Aorta (tissue), 5 donors: ENCODE measurements at regions of chr9 and their contacts with region 1.

Region 1: DNA sequence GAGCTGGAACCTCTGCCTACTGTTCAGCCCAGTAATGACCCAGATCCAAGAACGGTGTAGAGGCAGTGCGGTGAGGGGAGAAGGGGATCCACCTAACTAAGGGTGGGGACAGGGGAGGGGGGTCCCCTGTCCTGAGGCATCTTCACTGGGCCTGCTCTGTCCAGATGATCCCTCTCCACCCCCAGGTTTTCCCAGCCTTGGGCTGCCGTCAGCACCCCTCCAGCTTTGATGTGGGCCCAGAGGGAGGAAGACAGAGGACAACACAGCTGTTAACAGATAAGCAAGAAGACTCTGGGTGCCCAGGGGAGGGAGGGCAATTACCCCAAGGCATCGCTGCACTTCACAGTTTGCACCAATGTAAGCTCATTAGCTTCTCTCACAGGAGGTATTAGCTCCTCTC is 19.3 kb downstream of the BICD2 start:
- DNase-seq: no peak
- ATAC-seq: no peak
- H3K4me3 ChIP-seq: no peak overlapping the region
- H3K27ac ChIP-seq: no peak overlapping the region
- H3K4me1 ChIP-seq: no peaks in the 10 kb centered on the region
- H3K27me3 ChIP-seq: no peaks in the 10 kb centered on the region

Region 2: GRCh38 chr9:92648474-92649372 is 96.6 kb before region 1 on chr9:
- intact Hi-C with region 1: no loop called
- DNase-seq: peak in 1 of 2 donors; percentile 57
- ATAC-seq: no peak
- H3K4me3 ChIP-seq: no peak overlapping the region
- H3K27ac ChIP-seq: no peak overlapping the region
- H3K4me1 ChIP-seq: no peaks in the 10 kb centered on the region
- H3K27me3 ChIP-seq: no peaks in the 10 kb centered on the region

Region 3: DNA sequence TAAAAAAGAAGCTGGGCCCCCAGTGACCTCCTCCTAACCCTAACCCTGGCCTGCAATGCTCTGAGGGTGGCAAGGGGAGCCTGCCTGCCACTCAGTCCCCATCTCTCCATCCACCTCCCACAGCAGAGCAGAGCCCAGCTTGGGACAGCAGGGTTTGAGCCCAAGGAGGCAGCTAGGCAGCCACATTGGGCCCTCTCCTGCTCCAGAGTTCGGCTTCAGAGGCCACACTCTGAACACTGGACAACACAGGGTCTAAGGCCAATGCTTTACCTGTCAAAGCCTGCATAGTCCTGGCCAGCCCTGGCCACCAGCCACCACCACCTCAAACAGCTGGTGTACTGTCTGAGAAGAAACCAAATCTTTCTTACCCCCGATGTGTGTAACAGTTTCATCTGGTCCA is 14.1 kb after region 1 on chr9:
- intact Hi-C with region 1: loop called in 1 of 2 experiments (anchors 2 kb)
- DNase-seq: peak in 1 of 2 donors; percentile 50
- ATAC-seq: no peak
- H3K4me3 ChIP-seq: no peak overlapping the region
- H3K27ac ChIP-seq: no peak overlapping the region
- H3K4me1 ChIP-seq: no peaks in the 10 kb centered on the region
- H3K27me3 ChIP-seq: no peaks in the 10 kb centered on the region

Region 4: GRCh38 chr9:92781923-92782322 is 36.6 kb after region 1 on chr9:
- intact Hi-C with region 1: no loop called
- DNase-seq: no peak
- ATAC-seq: no peak
- H3K4me3 ChIP-seq: no peak overlapping the region
- H3K27ac ChIP-seq: no peak overlapping the region
- H3K4me1 ChIP-seq: no peaks in the 10 kb centered on the region
- H3K27me3 ChIP-seq: peaks cover 0 to 4% of the 10 kb centered on the region in 2 donors